ENCODE measurements at regions of chr5 and their contacts with region 1.

Region 1: GRCh38 chr5:177431317-177432142 is 5.1 kb downstream of the GRK6 start:
- DNase-seq: peak; percentile 79
- H3K4me3 Mint-ChIP-seq: peak overlapping the region; percentile 95
- H3K27ac Mint-ChIP-seq: peak overlapping the region; percentile 95
- H3K4me1 Mint-ChIP-seq: peaks cover 74% of the 10 kb centered on the region
- H3K27me3 Mint-ChIP-seq: no peaks in the 10 kb centered on the region

Region 2: DNA sequence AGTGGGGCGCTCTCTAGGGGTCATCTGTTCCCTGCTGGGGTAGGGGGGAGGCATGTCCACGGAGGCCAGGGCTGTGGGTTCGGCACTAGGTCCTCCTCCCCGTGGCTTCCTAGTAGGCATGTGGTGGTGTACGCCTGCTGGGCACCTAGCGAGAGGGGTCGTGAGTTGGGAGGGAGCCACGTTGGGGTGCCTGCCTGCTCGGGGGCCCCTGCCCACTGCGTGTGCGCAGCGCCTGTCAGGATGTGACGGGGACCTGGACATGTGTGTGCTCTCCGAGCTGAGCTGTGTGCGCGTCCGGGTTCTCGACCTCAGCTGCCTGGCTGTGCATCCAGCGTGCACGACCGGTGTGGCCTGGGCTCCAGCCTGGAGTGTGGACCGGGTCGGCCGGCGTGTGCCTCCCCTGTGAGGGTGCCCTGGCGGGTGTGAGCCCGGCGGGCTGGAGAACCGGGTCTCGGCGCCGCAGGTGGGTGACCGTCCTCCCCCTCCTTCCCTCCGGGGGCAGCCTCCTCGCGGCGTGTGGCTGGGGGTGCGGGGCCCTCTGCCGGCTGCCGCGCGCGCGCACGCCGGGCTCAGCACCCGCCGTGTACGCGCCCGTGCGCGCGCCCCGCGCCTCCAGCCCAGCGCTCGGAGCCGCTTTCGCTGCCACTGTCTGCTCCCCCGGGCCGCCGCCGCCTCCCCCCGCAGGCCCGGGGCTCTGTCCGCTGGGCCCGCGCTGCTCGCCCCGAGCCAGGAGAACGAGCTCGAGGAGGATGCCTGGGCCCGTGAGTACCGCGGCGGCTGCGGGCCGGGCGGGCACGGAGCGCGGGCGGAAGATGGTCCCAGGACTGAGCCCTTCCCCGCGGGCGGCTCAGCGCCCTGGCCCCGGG is 14.9 kb after region 1 on chr5 and contains the start of gene PRR7:
- CTCF ChIA-PET with region 1: interaction called, 37 read pairs
- intact Hi-C with region 1: loop called (anchors 1 kb)
- DNase-seq: peak; percentile 65
- H3K4me3 Mint-ChIP-seq: peak within 1 kb of the TSS; percentile 77
- H3K27ac Mint-ChIP-seq: peak within 1 kb of the TSS; percentile 92
- H3K4me1 Mint-ChIP-seq: peaks cover 45% of the 10 kb centered on the region
- H3K27me3 Mint-ChIP-seq: no peaks in the 10 kb centered on the region
- total RNA-seq, gene PRR7: 7.4 to 8.2 TPM

Region 3: GRCh38 chr5:177592010-177592834 is 160.7 kb after region 1 on chr5 and contains the start of gene TMED9:
- CTCF ChIA-PET with region 1: no interaction called
- intact Hi-C with region 1: no loop called
- DNase-seq: peak; percentile 88
- H3K4me3 Mint-ChIP-seq: peak within 1 kb of the TSS; percentile 98
- H3K27ac Mint-ChIP-seq: peak within 1 kb of the TSS; percentile 94
- H3K4me1 Mint-ChIP-seq: peaks cover 35% of the 10 kb centered on the region
- H3K27me3 Mint-ChIP-seq: peaks cover 9% of the 10 kb centered on the region
- total RNA-seq, gene TMED9: 110 TPM